WTC11 (cell line): ENCODE measurements at regions of chr18 and their contacts with region 1.

Region 1: DNA sequence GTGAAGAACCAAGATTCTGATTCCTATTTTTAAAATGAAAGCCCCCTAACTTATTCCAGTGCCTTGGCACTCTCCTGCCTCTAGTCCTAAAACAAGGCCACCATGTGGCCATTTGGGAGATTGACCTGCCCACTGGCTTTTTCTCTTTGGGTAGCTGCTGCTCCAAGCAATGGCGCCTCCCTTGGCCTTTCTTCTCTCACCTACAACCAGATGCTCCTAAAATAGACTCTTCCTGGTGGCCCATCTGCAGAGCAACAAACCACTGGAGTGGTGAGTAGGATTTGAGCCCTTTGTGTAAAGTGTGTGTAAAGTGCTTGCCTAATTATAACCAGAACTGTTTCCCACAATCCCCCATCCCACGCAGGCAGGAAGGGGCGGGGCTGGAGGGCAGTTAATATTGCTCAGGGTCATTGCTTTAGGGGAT is 114.2 kb downstream of the FHOD3 start:
- DNase-seq: peak; percentile 73
- ATAC-seq: peak; percentile 92
- H3K4me3 Mint-ChIP-seq: no peak overlapping the region
- H3K27ac Mint-ChIP-seq: no peak overlapping the region
- H3K4me1 Mint-ChIP-seq: peaks cover 3% of the 10 kb centered on the region
- H3K27me3 Mint-ChIP-seq: no peaks in the 10 kb centered on the region
- CTCF ChIP-seq: peak; percentile 31

Region 2: GRCh38 chr18:36296650-36297416 is 114.9 kb before region 1 on chr18:
- CTCF ChIA-PET with region 1: interaction called, 26 read pairs
- POLR2A ChIA-PET with region 1: no interaction called
- DNase-seq: peak; percentile 85
- ATAC-seq: peak; percentile 67
- H3K4me3 Mint-ChIP-seq: no peak overlapping the region
- H3K27ac Mint-ChIP-seq: no peak overlapping the region
- H3K4me1 Mint-ChIP-seq: peaks cover 5% of the 10 kb centered on the region
- H3K27me3 Mint-ChIP-seq: peaks cover 27% of the 10 kb centered on the region
- CTCF ChIP-seq: no peak

Region 3: GRCh38 chr18:36543991-36544725 is 132.4 kb after region 1 on chr18:
- CTCF ChIA-PET with region 1: no interaction called
- POLR2A ChIA-PET with region 1: no interaction called
- DNase-seq: no peak
- ATAC-seq: no peak
- H3K4me3 Mint-ChIP-seq: no peak overlapping the region
- H3K27ac Mint-ChIP-seq: no peak overlapping the region
- H3K4me1 Mint-ChIP-seq: no peaks in the 10 kb centered on the region
- H3K27me3 Mint-ChIP-seq: no peaks in the 10 kb centered on the region; the same call in 1 of the 2 replicates
- CTCF ChIP-seq: no peak